ENCODE measurements at regions of chr22 and their contacts with region 1.

Region 1: GRCh38 chr22:35313311-35314121 is 13.8 kb downstream of the TOM1 start:
- DNase-seq: peak; percentile 95 to 98
- ATAC-seq: peak; percentile 58 to 61
- H3K4me3 ChIP-seq: peak overlapping the region in 2 of 4 donors; percentile 28 to 31
- H3K27ac ChIP-seq: peak overlapping the region; percentile 95 to 99 (median 97)
- H3K4me1 ChIP-seq: peaks cover 92 to 93% of the 10 kb centered on the region in 2 donors
- H3K27me3 ChIP-seq: no peaks in the 10 kb centered on the region
- CTCF ChIP-seq: no peak
- POLR2A ChIP-seq: no peak

Region 2: DNA sequence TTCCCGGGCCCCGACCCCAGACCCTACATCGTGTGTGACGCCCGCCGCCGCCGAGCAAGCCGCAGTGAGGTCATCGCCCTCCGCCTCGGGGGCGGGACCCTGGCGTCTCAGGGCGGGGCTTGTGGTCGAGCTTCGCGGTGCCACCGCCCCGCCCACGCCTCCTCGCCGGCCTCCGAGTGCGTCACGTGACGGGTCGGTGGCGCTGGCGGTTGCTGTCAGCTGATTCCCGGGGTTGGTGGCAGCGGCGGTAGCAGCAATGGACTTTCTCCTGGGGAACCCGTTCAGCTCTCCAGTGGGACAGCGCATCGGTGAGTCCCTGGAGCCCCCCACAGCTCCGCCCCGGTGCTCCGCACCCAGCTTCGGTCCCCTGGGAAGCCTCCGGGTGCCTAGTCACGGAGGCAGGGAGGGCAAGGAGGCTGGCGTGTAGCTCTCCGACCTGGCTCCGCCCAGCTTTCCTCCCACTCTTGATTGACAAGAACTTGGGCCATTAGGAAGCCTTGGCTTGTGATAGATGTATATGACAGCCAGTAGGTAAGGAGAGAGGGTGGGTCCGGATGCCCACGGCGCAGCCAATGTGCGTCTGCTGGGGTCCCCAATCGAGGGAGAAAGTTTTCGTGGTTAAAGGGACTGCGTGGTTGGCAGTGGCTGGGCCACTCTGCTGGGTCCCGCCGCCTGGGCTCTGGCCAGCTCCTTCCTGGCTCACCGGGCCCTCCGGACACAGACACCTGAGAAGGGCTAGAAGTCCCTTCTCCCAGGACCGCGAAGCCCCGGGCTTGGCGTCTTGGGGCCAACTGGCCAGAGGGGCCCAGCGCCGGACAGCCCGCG is 13.6 kb before region 1 on chr22 and contains the start of gene TOM1:
- in situ Hi-C with region 1: no loop called
- intact Hi-C with region 1: loop called (anchors 1 kb)
- DNase-seq: peak; percentile 96 to 98
- ATAC-seq: peak; percentile 87 to 91
- H3K4me3 ChIP-seq: peak within 1 kb of the TSS; percentile 80 to 86 (median 82)
- H3K27ac ChIP-seq: peak within 1 kb of the TSS; percentile 98 to 99 (median 98)
- H3K4me1 ChIP-seq: peaks cover 37 to 39% of the 10 kb centered on the region in 2 donors
- H3K27me3 ChIP-seq: no peaks in the 10 kb centered on the region
- CTCF ChIP-seq: peak in 1 of 5 experiments; percentile 36
- POLR2A ChIP-seq: peak; percentile 98
- total RNA-seq, gene TOM1: 363 to 609 (median 425) TPM

Region 3: DNA sequence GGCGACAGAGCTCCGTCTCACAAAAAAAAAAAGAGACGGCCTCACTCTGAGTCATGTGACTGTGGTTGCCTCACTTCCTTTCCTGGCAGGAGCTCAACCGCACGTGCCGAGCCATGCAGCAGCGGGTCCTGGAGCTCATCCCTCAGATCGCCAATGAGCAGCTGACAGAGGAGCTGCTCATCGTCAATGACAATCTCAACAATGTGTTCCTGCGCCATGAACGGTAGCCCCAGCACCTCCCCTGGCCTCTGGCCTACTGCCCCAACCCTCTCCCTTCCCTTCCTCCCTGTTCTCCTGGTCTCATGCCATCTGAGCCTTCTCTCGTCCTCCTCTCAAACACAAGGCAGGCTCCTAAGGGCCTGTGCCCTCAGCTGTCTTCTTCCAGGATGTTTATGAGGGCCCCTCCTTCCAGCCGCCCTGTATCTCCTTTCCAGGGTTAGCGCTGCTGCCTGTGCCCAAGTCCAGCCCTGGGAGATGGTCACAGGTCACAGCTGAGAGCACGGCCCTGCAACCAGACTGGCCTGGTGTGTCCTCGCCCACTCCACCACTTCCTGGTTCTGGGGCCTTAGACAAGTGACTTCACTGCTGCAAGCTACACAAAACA is 16.8 kb after region 1 on chr22:
- in situ Hi-C with region 1: no loop called
- intact Hi-C with region 1: loop called (anchors 1 kb)
- DNase-seq: peak; percentile 88 to 94
- ATAC-seq: peak; percentile 72 to 86
- H3K4me3 ChIP-seq: no peak overlapping the region
- H3K27ac ChIP-seq: peak overlapping the region; percentile 83 to 98 (median 92)
- H3K4me1 ChIP-seq: peaks cover 7 to 14% of the 10 kb centered on the region in 2 donors
- H3K27me3 ChIP-seq: no peaks in the 10 kb centered on the region
- CTCF ChIP-seq: no peak
- POLR2A ChIP-seq: peak; percentile 54 to 55

Region 4: GRCh38 chr22:35350539-35351503 is 37.3 kb after region 1 on chr22:
- in situ Hi-C with region 1: no loop called
- intact Hi-C with region 1: loop called (anchors 2 kb)
- DNase-seq: peak; percentile 94 to 95
- ATAC-seq: peak; percentile 84 to 86
- H3K4me3 ChIP-seq: peak overlapping the region; percentile 53 to 75 (median 61)
- H3K27ac ChIP-seq: peak overlapping the region; percentile 83 to 91 (median 86)
- H3K4me1 ChIP-seq: peaks cover 16 to 24% of the 10 kb centered on the region in 2 donors
- H3K27me3 ChIP-seq: no peaks in the 10 kb centered on the region
- CTCF ChIP-seq: peak; percentile 93 to 97 (median 95)
- POLR2A ChIP-seq: peak; percentile 68 to 75

Region 5: GRCh38 chr22:35589071-35589952 is 275.8 kb after region 1 on chr22:
- in situ Hi-C with region 1: no loop called
- intact Hi-C with region 1: loop called (anchors 2 kb)
- DNase-seq: peak; percentile 86 to 97
- ATAC-seq: peak; percentile 57 to 72
- H3K4me3 ChIP-seq: peak overlapping the region in 1 of 4 donors; percentile 26
- H3K27ac ChIP-seq: peak overlapping the region; percentile 90 to 99 (median 96)
- H3K4me1 ChIP-seq: peaks cover 61% of the 10 kb centered on the region in 2 donors
- H3K27me3 ChIP-seq: no peaks in the 10 kb centered on the region
- CTCF ChIP-seq: peak in 1 of 5 experiments; percentile 17
- POLR2A ChIP-seq: peak; percentile 69 to 74

Region 6: GRCh38 chr22:35611891-35612576 is 298.5 kb after region 1 on chr22:
- in situ Hi-C with region 1: no loop called
- intact Hi-C with region 1: loop called (anchors 5 kb)
- DNase-seq: peak; percentile 69 to 94
- ATAC-seq: peak; percentile 57 to 68
- H3K4me3 ChIP-seq: peak overlapping the region in 1 of 4 donors; percentile 56
- H3K27ac ChIP-seq: peak overlapping the region; percentile 92 to 97 (median 97)
- H3K4me1 ChIP-seq: peaks cover 66 to 75% of the 10 kb centered on the region in 2 donors
- H3K27me3 ChIP-seq: no peaks in the 10 kb centered on the region
- CTCF ChIP-seq: no peak
- POLR2A ChIP-seq: peak; percentile 36 to 75

Region 7: DNA sequence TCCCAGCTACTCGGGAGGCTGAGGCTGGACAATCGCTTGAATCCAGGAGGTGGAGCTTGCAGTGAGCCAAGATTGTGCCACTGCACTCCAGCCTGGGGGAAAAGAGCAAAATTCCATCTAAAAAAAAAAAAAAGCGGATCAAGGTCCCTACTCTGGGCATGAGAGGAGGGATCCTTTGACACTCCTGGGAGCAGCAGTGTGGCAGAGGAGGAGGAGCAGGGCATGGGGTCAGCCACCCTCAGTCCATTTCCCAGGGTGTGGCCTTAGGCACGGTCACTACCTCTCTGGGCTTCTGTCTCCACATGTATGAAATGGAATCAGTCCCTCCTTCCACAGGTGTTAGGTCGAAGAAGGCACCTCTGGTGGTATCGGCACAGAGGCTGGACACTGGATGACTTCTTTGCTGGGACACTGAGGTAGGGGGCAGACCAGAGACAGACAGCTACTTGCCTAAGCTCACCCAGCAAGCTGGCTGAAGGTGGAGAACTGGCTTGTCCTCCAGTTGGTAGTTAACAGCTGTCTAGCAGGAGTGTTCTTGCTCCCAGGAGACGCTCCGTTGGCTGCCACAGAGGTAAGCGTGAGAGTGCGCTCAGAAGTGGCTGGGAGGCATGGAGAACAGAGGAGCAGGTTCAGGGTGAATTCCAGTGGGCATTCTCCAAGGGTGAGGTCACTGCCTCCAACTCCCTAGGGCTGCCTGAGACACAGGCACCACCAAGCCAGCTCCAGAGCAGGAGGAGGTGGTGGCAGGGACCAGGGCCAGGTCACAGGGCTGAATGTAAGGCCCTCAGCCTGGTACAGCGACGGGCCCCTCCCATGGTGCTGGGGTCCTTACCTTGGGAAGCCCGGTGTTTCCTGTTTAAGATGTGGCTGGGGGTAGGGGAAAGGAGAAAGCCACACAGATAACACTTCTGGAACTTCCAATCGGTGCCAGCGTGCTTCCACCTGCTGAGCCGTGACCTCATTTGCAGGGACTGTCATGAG is 1148.4 kb after region 1 on chr22:
- in situ Hi-C with region 1: no loop called
- intact Hi-C with region 1: loop called (anchors 10 kb)
- DNase-seq: peak; percentile 50 to 89
- ATAC-seq: peak; percentile 7 to 45
- H3K4me3 ChIP-seq: no peak overlapping the region
- H3K27ac ChIP-seq: peak overlapping the region; percentile 91 to 98 (median 94)
- H3K4me1 ChIP-seq: peaks cover 58 to 68% of the 10 kb centered on the region in 2 donors
- H3K27me3 ChIP-seq: no peaks in the 10 kb centered on the region
- CTCF ChIP-seq: no peak
- POLR2A ChIP-seq: peak in 1 of 2 donors; percentile 21